Colonic mucosa (tissue), 4 donors: ENCODE measurements at regions of chr5 and their contacts with region 1.

Region 1: DNA sequence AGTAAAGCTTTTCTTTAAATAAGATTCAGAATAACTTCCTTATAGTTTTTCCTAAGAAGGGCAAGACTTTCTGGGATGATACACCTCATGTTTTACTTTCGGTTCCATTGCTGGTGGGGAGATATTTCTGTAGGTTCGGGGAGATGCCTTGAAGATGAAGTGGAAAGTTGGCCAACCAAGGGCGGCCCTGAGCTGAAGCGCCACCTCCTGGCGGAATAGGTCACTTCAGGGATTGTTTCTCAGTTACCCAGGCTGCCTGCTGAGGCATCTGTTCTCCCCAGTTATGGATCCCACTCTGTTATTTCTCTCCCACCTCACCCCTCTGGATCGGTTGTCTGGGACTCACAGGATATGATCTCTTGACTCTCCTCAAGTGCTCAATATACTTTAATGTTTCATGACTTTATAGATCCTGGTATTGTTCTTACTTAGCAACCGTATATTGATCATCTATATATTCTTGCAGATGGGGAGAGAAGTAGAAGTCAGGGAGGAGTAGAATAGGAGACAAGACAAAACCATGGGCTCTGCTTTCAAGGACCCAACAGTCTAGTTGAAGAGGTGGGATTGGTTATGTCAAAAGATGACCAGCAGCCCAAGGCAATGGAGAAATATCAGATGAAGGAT is 23.4 kb downstream of the MEGF10 start:
- DNase-seq: peak; percentile 80
- H3K4me3 ChIP-seq: no peak overlapping the region
- H3K27ac ChIP-seq: no peak overlapping the region
- H3K4me1 ChIP-seq: peaks cover 4% of the 10 kb centered on the region
- H3K27me3 ChIP-seq: no peaks in the 10 kb centered on the region
- CTCF ChIP-seq: peak; percentile 75

Region 2: DNA sequence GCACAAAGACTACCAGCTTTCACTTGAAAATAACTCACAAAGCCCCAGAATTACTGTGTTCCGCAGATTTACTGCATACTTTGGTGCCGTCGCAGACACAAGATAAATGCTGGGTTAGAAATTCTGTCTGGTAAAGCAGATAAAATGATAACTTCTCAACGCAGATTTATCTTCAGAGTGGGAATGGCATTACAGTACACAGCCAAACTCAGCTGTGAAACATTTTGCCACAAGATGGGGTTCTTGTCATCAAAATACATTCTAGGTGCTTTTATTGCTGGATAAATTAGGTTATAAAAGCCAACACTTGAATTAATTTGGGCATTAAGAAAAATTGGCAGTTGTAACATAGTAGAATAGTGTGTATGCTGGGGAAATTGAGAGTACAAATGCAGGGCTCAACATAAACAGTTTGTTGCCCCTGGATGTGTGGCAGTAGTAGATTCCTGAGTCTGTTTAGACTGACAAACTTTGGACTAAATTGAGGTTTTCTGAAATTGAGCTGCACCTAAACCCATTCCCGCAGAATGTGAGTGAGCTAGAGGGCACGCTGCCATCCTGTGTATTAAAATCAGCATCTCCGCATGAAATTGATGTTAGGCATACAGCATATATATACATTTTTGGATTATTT is 475.9 kb before region 1 on chr5:
- intact Hi-C with region 1: loop called (anchors 10 kb)
- DNase-seq: no peak
- H3K4me3 ChIP-seq: no peak overlapping the region
- H3K27ac ChIP-seq: no peak overlapping the region
- H3K4me1 ChIP-seq: no peaks in the 10 kb centered on the region
- H3K27me3 ChIP-seq: no peaks in the 10 kb centered on the region
- CTCF ChIP-seq: peak; percentile 23